MCF 10A (cell line): ENCODE measurements at regions of chr2 and their contacts with region 1.

Region 1: GRCh38 chr2:10072656-10073480 is 7.3 kb downstream of the CYS1 start:
- DNase-seq: peak; percentile 87
- H3K4me3 Mint-ChIP-seq: no peak overlapping the region
- H3K27ac Mint-ChIP-seq: no peak overlapping the region
- H3K4me1 Mint-ChIP-seq: peaks cover 8% of the 10 kb centered on the region
- H3K27me3 Mint-ChIP-seq: peaks cover 46% of the 10 kb centered on the region
- CTCF ChIP-seq: peak; percentile 67

Region 2: DNA sequence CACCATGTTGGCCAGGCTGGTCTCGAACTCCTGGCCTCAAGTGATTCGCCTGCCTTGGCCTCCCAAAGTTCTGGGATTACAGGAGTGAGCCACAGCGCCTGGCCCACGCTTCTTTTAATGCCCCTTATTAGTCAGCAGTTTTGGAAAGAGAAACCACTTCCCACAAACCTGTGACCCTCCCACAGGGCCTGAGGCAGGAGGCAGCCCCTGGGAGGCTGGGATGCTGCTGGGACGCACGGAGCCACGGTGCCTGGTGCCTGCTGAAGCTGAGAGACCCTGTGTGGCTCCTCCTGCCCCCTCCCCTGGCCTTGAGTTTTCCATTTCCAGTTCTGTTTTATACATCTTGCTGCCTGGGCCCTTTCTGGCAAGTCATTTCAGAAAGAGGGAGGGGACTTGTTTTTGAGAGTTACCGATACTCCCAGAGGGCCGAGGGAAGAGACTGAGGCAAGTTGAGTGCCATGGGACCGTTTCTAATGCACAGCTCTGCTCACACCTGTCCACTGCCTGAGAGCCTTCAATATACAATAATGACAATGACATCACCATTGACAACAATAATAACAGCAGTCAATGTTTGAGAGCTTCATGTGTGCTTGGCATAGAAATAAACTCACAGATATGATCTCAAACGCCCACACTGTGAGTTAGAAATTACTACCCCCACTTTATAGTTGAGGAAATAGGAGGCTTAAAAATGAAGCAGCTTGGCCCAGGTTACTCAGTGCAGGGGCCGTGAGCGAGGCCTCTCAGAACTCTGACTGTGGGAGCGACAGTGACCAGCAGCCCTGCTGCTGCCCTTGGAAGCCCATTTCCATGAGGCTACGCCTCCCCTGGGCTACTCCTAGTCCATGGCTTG is 364.0 kb before region 1 on chr2:
- CTCF ChIA-PET with region 1: no interaction called
- POLR2A ChIA-PET with region 1: no interaction called
- intact Hi-C with region 1: no loop called
- DNase-seq: no peak
- H3K4me3 Mint-ChIP-seq: no peak overlapping the region
- H3K27ac Mint-ChIP-seq: no peak overlapping the region
- H3K4me1 Mint-ChIP-seq: peaks cover 2% of the 10 kb centered on the region
- H3K27me3 Mint-ChIP-seq: no peaks in the 10 kb centered on the region
- CTCF ChIP-seq: no peak

Region 3: DNA sequence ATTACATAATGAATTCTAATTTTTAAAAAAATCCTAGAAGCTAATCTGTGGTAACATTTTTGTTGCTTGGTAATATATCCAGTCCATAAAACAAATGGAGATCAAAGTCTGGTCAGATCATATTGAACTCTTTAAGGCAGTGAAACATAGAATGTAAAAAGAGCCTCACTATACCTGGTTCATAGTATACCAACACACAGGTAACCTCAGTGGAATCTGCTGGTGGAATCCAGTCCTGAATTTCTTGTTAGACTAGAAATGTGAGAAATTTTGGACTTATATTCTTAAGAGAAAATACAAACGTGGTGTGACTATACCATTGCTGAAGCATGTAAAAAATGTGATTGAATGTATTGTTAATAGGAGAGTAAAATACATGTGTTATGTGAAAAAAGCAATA is 167.5 kb before region 1 on chr2:
- CTCF ChIA-PET with region 1: no interaction called
- POLR2A ChIA-PET with region 1: no interaction called
- intact Hi-C with region 1: no loop called
- DNase-seq: no peak
- H3K4me3 Mint-ChIP-seq: no peak overlapping the region
- H3K27ac Mint-ChIP-seq: no peak overlapping the region
- H3K4me1 Mint-ChIP-seq: peaks cover 7% of the 10 kb centered on the region
- H3K27me3 Mint-ChIP-seq: no peaks in the 10 kb centered on the region
- CTCF ChIP-seq: no peak

Region 4: DNA sequence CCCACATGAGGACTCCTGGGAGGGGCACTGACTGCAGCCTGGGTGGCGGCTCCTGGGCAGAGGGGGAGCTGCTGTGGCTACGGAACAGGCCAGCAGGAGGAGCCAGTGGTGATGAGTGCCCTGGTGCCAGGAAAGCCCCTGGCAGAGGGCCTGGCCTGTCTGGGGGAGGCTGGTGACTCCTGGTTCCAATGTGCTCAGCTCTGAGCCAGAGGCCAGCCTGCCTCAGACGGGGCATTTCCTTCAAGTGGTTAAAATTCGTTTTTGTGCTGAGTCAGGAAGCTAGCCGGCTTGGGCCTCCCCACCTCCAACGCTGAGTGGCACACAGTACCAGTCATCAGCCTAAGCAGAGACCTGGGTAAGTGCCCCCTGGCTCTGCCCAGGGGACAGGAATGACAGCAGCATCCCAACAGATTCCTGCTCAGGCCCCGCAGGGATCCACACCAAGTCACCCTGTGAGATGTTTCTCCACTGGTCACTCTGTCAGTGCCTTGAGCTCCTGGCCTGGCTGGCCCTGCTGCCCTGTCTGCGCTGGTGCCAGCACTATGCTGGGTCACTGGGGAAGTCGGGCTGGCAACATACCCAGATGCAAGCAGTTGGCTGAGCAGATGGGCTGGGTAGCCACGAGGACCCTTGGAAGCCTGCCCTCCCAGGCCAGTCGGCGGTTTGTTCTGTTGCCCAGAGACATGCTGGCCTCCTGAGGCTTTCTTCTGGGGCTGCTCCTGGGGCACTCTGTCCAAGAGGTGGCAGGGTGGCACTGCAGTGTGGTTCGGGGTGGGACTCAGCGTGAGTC is 36.6 kb before region 1 on chr2:
- CTCF ChIA-PET with region 1: no interaction called
- POLR2A ChIA-PET with region 1: no interaction called
- intact Hi-C with region 1: no loop called
- DNase-seq: peak; percentile 91
- H3K4me3 Mint-ChIP-seq: no peak overlapping the region
- H3K27ac Mint-ChIP-seq: no peak overlapping the region
- H3K4me1 Mint-ChIP-seq: no peaks in the 10 kb centered on the region
- H3K27me3 Mint-ChIP-seq: no peaks in the 10 kb centered on the region
- CTCF ChIP-seq: peak; percentile 49

Region 5: GRCh38 chr2:10057231-10058107 is 15.4 kb before region 1 on chr2:
- CTCF ChIA-PET with region 1: interaction called, 24 read pairs
- POLR2A ChIA-PET with region 1: no interaction called
- intact Hi-C with region 1: no loop called
- DNase-seq: peak; percentile 70
- H3K4me3 Mint-ChIP-seq: peak overlapping the region; percentile 59
- H3K27ac Mint-ChIP-seq: peak overlapping the region; percentile 85
- H3K4me1 Mint-ChIP-seq: peaks cover 10% of the 10 kb centered on the region
- H3K27me3 Mint-ChIP-seq: no peaks in the 10 kb centered on the region
- CTCF ChIP-seq: no peak

Region 6: GRCh38 chr2:10091182-10091888 is 18.5 kb after region 1 on chr2:
- CTCF ChIA-PET with region 1: interaction called, 127 read pairs
- POLR2A ChIA-PET with region 1: interaction called, 10 read pairs
- intact Hi-C with region 1: no loop called
- DNase-seq: no peak
- H3K4me3 Mint-ChIP-seq: no peak overlapping the region
- H3K27ac Mint-ChIP-seq: no peak overlapping the region
- H3K4me1 Mint-ChIP-seq: peaks cover 11% of the 10 kb centered on the region
- H3K27me3 Mint-ChIP-seq: peaks cover 10% of the 10 kb centered on the region
- CTCF ChIP-seq: no peak

Region 7: GRCh38 chr2:10097352-10098148 is 24.7 kb after region 1 on chr2:
- CTCF ChIA-PET with region 1: interaction called, 127 read pairs
- POLR2A ChIA-PET with region 1: interaction called, 10 read pairs
- intact Hi-C with region 1: loop called (anchors 1 kb)
- DNase-seq: peak; percentile 73
- H3K4me3 Mint-ChIP-seq: no peak overlapping the region
- H3K27ac Mint-ChIP-seq: peak overlapping the region; percentile 31
- H3K4me1 Mint-ChIP-seq: peaks cover 18% of the 10 kb centered on the region
- H3K27me3 Mint-ChIP-seq: no peaks in the 10 kb centered on the region
- CTCF ChIP-seq: peak; percentile 80

Region 8: DNA sequence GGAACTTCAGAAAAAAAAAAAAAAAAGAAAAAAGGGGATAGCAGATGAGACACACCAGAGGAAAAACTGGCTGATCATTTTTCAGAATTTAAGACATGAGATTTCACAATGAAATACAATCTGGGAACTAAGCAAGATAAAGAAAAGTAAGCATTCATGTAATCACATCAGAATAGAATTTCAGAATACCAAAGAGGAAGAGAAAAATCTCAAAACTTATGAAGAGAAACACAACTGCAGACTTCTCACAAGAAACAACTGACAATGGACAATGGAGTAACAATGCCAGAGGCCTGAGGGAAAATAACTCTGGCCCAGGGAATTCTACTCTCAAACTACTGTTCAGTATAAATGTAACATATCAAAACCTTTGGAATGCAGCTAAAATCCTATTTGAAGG is 36.4 kb after region 1 on chr2:
- CTCF ChIA-PET with region 1: interaction called, 13 read pairs
- POLR2A ChIA-PET with region 1: no interaction called
- intact Hi-C with region 1: no loop called
- DNase-seq: no peak
- H3K4me3 Mint-ChIP-seq: no peak overlapping the region
- H3K27ac Mint-ChIP-seq: no peak overlapping the region
- H3K4me1 Mint-ChIP-seq: no peaks in the 10 kb centered on the region
- H3K27me3 Mint-ChIP-seq: no peaks in the 10 kb centered on the region
- CTCF ChIP-seq: no peak

Region 9: GRCh38 chr2:10448208-10448645 is 375.4 kb after region 1 on chr2 and contains the start of gene ODC1:
- CTCF ChIA-PET with region 1: interaction called, 13 read pairs
- POLR2A ChIA-PET with region 1: no interaction called
- intact Hi-C with region 1: no loop called
- DNase-seq: peak; percentile 86
- H3K4me3 Mint-ChIP-seq: peak within 1 kb of the TSS; percentile 93
- H3K27ac Mint-ChIP-seq: peak within 1 kb of the TSS; percentile 91
- H3K4me1 Mint-ChIP-seq: peaks cover 14% of the 10 kb centered on the region
- H3K27me3 Mint-ChIP-seq: no peaks in the 10 kb centered on the region
- CTCF ChIP-seq: no peak
- total RNA-seq, gene ODC1: 321 and 341 TPM in 2 replicates

Region 10: GRCh38 chr2:10659898-10660568 is 587.2 kb after region 1 on chr2:
- CTCF ChIA-PET with region 1: interaction called, 4 read pairs
- POLR2A ChIA-PET with region 1: interaction called, 4 read pairs
- intact Hi-C with region 1: loop called (anchors 5 kb)
- DNase-seq: peak; percentile 77
- H3K4me3 Mint-ChIP-seq: no peak overlapping the region
- H3K27ac Mint-ChIP-seq: no peak overlapping the region
- H3K4me1 Mint-ChIP-seq: peaks cover 13% of the 10 kb centered on the region
- H3K27me3 Mint-ChIP-seq: no peaks in the 10 kb centered on the region
- CTCF ChIP-seq: peak; percentile 75